H1 (cell line): ENCODE measurements at regions of chr22 and their contacts with region 1.

Region 1: DNA sequence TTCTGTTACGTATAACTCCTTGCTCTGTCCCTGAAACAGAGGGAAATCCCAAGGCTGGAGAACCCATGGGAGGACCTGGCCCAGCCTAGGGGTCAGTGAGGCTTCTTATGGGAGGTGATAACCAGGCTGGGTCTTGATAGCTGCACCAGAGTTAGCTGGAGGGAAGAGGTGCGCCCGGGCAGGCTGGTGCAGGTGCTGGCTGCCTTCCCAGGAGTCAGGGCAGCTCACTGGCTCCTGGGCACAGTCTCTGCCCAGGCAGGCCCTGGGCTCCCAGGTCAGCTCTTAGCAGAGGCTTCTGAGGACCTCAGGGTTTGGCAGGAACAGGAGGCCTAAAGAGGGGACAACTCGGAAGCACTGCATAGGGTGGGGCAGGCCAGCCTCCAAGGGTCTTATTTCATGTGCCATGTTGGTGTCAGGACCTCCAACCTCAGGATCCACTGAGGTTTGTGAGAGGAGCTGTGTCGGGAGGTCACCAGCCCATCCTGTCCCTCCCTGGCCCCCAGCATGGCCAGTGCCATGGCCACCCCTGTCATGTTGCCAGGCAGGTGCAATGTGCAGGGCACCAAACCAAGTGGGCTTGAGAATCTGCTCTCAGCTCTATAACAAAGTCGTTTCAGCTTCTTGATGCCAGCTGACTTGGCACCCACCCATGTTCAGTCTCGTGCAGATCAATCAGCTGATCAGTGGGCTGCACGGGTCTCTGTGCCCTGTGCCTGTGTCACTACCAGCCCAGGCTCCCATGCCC is 20.5 kb upstream of the CELSR1 start:
- DNase-seq: no peak
- H3K4me3 ChIP-seq: no peak overlapping the region
- H3K27ac ChIP-seq: no peak overlapping the region
- H3K4me1 ChIP-seq: no peaks in the 10 kb centered on the region; a peak in 1 of 7 replicates
- H3K27me3 ChIP-seq: no peaks in the 10 kb centered on the region; a peak in 2 of 7 replicates
- CTCF ChIP-seq: no peak
- EP300 ChIP-seq: no peak
- POLR2A ChIP-seq: no peak
- RAD21 ChIP-seq: no peak

Region 2: GRCh38 chr22:46355371-46355995 is 202.4 kb before region 1 on chr22:
- CTCF ChIA-PET with region 1: interaction called, 10 read pairs
- POLR2A ChIA-PET with region 1: no interaction called
- DNase-seq: peak in 1 of 2 experiments; percentile 97
- H3K4me3 ChIP-seq: no peak overlapping the region
- H3K27ac ChIP-seq: 0 out of 2 replicates have a peak overlapping the region, but pooled peaks have one; percentile 35
- H3K4me1 ChIP-seq: no peaks in the 10 kb centered on the region
- H3K27me3 ChIP-seq: no peaks in the 10 kb centered on the region
- CTCF ChIP-seq: peak; percentile 91 to 95 (median 92)
- EP300 ChIP-seq: no peak
- POLR2A ChIP-seq: no peak
- RAD21 ChIP-seq: peak; percentile 95 to 98

Region 3: DNA sequence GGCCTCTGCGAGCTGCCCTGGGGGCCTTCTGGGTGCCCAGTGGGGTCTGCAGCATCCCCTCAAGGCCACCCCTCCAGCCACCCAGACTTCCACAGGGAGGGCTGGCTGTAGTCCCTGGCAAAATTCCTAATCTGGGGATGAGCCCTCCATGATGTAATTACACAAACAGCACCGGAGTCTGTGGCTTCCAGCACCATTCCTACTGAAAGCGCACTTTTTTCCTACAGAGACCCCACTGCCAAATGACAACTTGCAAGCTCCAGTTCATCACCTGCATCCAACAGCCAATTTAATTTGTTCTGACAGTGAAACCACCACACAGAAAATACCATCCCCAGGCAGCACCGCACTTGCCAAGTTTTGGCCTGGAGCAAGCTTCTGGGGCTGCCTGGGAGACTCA is 152.0 kb before region 1 on chr22:
- CTCF ChIA-PET with region 1: no interaction called
- POLR2A ChIA-PET with region 1: no interaction called
- DNase-seq: no peak
- H3K4me3 ChIP-seq: no peak overlapping the region
- H3K27ac ChIP-seq: no peak overlapping the region
- H3K4me1 ChIP-seq: peaks cover 0 to 7% (median 4%) of the 10 kb centered on the region in 4 experiments; a peak in 4 of 7 replicates
- H3K27me3 ChIP-seq: no peaks in the 10 kb centered on the region
- CTCF ChIP-seq: no peak
- EP300 ChIP-seq: no peak
- POLR2A ChIP-seq: no peak
- RAD21 ChIP-seq: no peak